ENCODE measurements at regions of chr4 and their contacts with region 1.

Region 1: DNA sequence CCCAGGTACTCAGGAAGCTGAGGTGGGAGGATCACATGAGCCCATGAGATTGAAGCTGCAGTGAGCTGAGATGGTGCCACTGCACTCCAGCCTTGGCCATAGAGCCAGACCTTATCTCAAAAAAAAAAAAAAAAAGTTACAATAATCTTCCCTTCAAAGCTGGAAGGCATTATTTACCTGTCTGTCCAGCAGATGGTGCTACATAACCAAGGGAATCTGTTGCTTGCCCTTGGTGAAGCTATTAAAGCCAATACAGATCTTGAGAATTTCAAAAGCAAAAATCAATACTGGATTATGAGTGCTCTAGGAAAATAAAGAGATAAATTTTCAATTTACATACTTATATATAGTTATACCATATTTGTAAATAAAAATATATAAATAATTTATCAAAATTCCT is 25.9 kb downstream of the PKD2 start:
- DNase-seq: peak; percentile 34
- ATAC-seq: peak; percentile 68
- H3K4me3 ChIP-seq: no peak overlapping the region
- H3K27ac ChIP-seq: no peak overlapping the region
- H3K4me1 ChIP-seq: no peaks in the 10 kb centered on the region
- H3K27me3 ChIP-seq: no peaks in the 10 kb centered on the region
- CTCF ChIP-seq: peak; percentile 60 to 71 (median 61)
- POLR2A ChIP-seq: no peak
- RAD21 ChIP-seq: peak; percentile 79

Region 2: GRCh38 chr4:87738483-87738882 is 294.8 kb before region 1 on chr4:
- CTCF ChIA-PET with region 1: no interaction called
- POLR2A ChIA-PET with region 1: no interaction called
- RAD21 ChIA-PET with region 1: no interaction called
- intact Hi-C with region 1: no loop called
- DNase-seq: no peak
- ATAC-seq: no peak
- H3K4me3 ChIP-seq: no peak overlapping the region
- H3K27ac ChIP-seq: no peak overlapping the region
- H3K4me1 ChIP-seq: peaks cover 0 to 8% of the 10 kb centered on the region in 2 experiments; a peak in 2 of 4 replicates
- H3K27me3 ChIP-seq: no peaks in the 10 kb centered on the region
- CTCF ChIP-seq: no peak
- POLR2A ChIP-seq: no peak
- RAD21 ChIP-seq: no peak

Region 3: GRCh38 chr4:87848622-87849351 is 184.5 kb before region 1 on chr4:
- CTCF ChIA-PET with region 1: interaction called, 14 read pairs
- POLR2A ChIA-PET with region 1: no interaction called
- RAD21 ChIA-PET with region 1: no interaction called
- intact Hi-C with region 1: no loop called
- DNase-seq: peak; percentile 51
- ATAC-seq: peak; percentile 97
- H3K4me3 ChIP-seq: peak overlapping the region; percentile 30 to 48
- H3K27ac ChIP-seq: no peak overlapping the region
- H3K4me1 ChIP-seq: peaks cover 0 to 9% of the 10 kb centered on the region in 2 experiments; a peak in 3 of 4 replicates
- H3K27me3 ChIP-seq: no peaks in the 10 kb centered on the region
- CTCF ChIP-seq: peak; percentile 55 to 62 (median 58)
- POLR2A ChIP-seq: no peak
- RAD21 ChIP-seq: peak; percentile 55

Region 4: GRCh38 chr4:88054901-88055300 is 21.6 kb after region 1 on chr4:
- CTCF ChIA-PET with region 1: interaction called, 13 read pairs
- POLR2A ChIA-PET with region 1: no interaction called
- RAD21 ChIA-PET with region 1: no interaction called
- intact Hi-C with region 1: no loop called
- DNase-seq: peak; percentile 23
- ATAC-seq: peak; percentile 87
- H3K4me3 ChIP-seq: no peak overlapping the region
- H3K27ac ChIP-seq: no peak overlapping the region
- H3K4me1 ChIP-seq: no peaks in the 10 kb centered on the region
- H3K27me3 ChIP-seq: no peaks in the 10 kb centered on the region
- CTCF ChIP-seq: peak; percentile 49 to 58 (median 57); a peak in 5 of 6 replicates
- POLR2A ChIP-seq: no peak
- RAD21 ChIP-seq: peak; percentile 79

Region 5: DNA sequence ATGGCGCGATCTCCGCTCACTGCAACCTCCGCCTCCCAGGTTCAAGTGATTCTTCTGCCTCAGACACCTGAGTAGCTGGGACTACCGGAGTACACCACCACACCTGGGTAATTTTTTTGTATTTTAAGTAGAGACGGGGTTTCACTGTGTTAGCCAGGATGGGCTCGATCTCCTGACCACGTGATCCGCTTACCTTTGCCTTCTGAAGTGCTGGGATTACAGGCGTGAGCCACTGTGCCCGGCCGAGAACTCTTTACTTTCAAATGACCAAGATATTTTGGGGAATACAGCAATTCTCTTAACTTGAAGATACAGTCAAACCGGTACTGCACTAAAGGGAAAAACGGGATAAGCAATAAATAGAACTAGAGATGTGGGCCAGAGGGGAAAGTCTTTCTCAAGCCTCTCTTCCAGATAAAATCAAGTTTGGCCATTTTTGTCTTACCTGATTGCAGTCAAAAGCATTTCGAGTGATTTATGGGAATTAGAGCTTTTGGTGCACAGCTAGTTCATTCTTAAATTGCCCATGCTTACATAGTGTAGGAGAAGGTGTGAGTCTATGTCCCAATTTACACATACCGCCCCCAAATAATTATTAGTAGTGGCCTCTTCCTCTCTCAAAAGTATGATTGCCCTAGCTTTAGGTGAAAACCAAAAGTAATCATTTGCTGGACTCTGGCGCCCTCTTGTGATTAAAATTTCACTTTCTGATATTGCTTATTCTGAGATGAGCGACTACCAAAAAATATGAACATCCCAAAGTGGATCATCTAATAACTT is 178.4 kb after region 1 on chr4:
- CTCF ChIA-PET with region 1: interaction called, 74 read pairs
- POLR2A ChIA-PET with region 1: no interaction called
- RAD21 ChIA-PET with region 1: interaction called, 15 to 17 read pairs
- intact Hi-C with region 1: loop called (anchors 1 kb)
- DNase-seq: peak; percentile 47
- ATAC-seq: peak; percentile 83
- H3K4me3 ChIP-seq: no peak overlapping the region
- H3K27ac ChIP-seq: no peak overlapping the region
- H3K4me1 ChIP-seq: peaks cover 0 to 2% of the 10 kb centered on the region in 2 experiments; a peak in 1 of 4 replicates
- H3K27me3 ChIP-seq: no peaks in the 10 kb centered on the region
- CTCF ChIP-seq: peak; percentile 45 to 87 (median 80); a peak in 5 of 6 replicates
- POLR2A ChIP-seq: no peak
- RAD21 ChIP-seq: peak; percentile 94

Region 6: GRCh38 chr4:88514557-88515511 is 481.5 kb after region 1 on chr4:
- CTCF ChIA-PET with region 1: interaction called, 16 read pairs
- POLR2A ChIA-PET with region 1: no interaction called
- RAD21 ChIA-PET with region 1: no interaction called
- intact Hi-C with region 1: loop called (anchors 2 kb)
- DNase-seq: no peak
- ATAC-seq: no peak
- H3K4me3 ChIP-seq: no peak overlapping the region
- H3K27ac ChIP-seq: no peak overlapping the region
- H3K4me1 ChIP-seq: no peaks in the 10 kb centered on the region
- H3K27me3 ChIP-seq: no peaks in the 10 kb centered on the region
- CTCF ChIP-seq: no peak
- POLR2A ChIP-seq: no peak
- RAD21 ChIP-seq: no peak

Region 7: GRCh38 chr4:88737307-88737941 is 704.1 kb after region 1 on chr4:
- CTCF ChIA-PET with region 1: no interaction called
- POLR2A ChIA-PET with region 1: no interaction called
- RAD21 ChIA-PET with region 1: no interaction called
- intact Hi-C with region 1: no loop called
- DNase-seq: no peak
- ATAC-seq: no peak
- H3K4me3 ChIP-seq: no peak overlapping the region
- H3K27ac ChIP-seq: no peak overlapping the region
- H3K4me1 ChIP-seq: no peaks in the 10 kb centered on the region
- H3K27me3 ChIP-seq: no peaks in the 10 kb centered on the region
- CTCF ChIP-seq: no peak
- POLR2A ChIP-seq: no peak
- RAD21 ChIP-seq: no peak

Measured in HCT116 (cell line).